ENCODE measurements at regions of chr5 and their contacts with region 1.

Region 1: GRCh38 chr5:151592855-151593408 is 1.8 kb upstream of the FAT2 start:
- DNase-seq: no peak
- H3K4me3 ChIP-seq: no peak overlapping the region
- H3K27ac ChIP-seq: no peak overlapping the region
- H3K4me1 ChIP-seq: peaks cover 62% of the 10 kb centered on the region
- H3K27me3 ChIP-seq: no peaks in the 10 kb centered on the region
- CTCF ChIP-seq: no peak

Region 2: DNA sequence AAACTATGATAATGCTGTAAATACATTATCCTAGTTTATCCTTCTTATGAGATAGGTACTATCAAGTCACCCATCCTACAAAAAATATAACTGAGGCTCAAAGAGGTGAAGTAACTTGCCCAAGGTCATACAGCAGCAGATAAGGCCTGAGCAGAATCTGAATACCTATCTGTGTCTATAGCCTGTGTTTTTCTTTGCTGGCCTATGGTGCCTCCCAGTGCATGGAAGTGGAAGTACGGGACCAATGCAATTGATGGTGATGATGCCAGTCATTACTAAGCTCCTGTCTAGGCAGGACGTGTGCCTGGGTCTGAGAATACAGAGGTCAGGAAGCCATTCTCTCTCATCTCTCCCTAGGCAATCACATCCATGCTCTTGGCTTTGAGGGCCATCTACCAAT is 69.6 kb before region 1 on chr5:
- CTCF ChIA-PET with region 1: no interaction called
- dilution Hi-C with region 1: no loop called
- in situ Hi-C with region 1: no loop called
- intact Hi-C with region 1: no loop called
- DNase-seq: peak; percentile 59
- H3K4me3 ChIP-seq: no peak overlapping the region
- H3K27ac ChIP-seq: no peak overlapping the region
- H3K4me1 ChIP-seq: no peaks in the 10 kb centered on the region
- H3K27me3 ChIP-seq: no peaks in the 10 kb centered on the region
- CTCF ChIP-seq: peak; percentile 61 to 63

Region 3: DNA sequence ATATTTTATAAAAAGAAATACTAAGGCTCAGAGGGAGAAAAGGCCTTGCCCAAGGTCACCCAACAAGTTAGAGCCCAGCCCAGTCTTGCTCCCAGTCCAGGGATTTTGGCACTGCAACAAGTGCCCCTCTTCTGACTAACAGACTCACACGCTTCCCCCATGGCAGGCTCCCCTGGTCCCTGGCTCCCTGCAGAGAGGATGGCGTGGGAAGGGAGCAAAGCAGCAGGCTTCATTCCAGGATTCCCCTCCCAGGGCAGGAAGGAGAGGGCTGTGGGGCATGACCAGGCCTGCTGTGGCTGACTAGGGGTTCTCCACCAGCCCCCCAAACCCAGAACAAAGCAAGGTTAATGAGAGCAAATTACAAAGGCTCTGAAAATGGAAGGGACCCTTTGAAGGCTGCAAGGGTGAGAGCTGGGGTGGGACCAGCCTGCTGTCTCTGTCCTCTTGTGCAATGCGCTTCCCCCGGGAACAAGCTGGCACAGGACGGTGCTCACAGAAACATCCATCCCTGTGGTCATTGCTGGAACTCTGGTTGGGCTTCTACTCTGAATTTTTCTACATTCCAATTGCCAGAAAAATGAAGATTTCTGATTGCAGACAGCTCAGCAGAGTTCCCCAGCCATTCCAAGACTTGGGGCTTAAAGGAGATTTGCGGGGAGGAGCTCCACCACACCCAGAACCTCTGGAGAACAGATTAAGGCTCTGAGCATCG is 35.3 kb after region 1 on chr5:
- CTCF ChIA-PET with region 1: no interaction called
- dilution Hi-C with region 1: no loop called
- in situ Hi-C with region 1: no loop called
- intact Hi-C with region 1: loop called (anchors 5 kb)
- DNase-seq: peak; percentile 86
- H3K4me3 ChIP-seq: no peak overlapping the region
- H3K27ac ChIP-seq: peak overlapping the region; percentile 69
- H3K4me1 ChIP-seq: peaks cover 66% of the 10 kb centered on the region
- H3K27me3 ChIP-seq: no peaks in the 10 kb centered on the region
- CTCF ChIP-seq: peak; percentile 18 to 30

Region 4: DNA sequence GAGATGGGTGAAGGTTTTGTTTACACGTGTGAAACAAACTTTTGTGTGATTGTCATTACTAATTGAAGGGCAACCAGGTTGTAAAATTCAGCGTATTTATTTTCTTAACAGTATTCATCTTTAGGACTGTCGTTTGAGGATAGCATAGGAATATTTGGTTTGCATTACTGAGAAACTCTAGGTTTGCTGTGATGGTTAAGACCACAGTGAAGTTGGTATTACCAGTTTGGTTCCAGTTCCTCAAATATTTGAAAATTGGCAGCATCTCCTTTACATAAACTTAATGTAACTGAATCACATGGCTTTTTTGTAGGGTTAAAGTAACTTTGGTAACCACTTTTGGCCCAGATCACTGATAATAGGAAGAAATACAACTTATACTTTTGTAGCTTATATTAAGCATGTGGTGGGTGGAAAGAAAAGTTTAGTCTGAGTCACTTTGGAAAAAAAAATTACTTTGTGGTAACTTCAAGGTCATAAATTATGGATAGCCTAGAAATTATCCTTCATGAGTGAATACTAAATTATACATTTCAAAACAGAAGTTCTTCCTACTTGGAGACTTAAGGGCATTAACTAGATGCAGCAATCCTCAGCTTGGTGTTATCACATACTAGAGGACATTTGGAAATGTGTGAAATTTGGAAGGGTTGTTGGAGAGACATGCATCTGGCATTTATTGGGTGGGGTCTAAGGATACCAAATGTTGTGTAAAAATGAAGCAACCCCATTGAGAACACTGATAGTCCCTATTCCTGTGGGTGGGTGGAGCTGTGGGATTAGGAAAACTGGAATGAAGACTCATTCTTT is 212.7 kb after region 1 on chr5:
- CTCF ChIA-PET with region 1: no interaction called
- dilution Hi-C with region 1: no loop called
- in situ Hi-C with region 1: no loop called
- intact Hi-C with region 1: no loop called
- DNase-seq: no peak
- H3K4me3 ChIP-seq: no peak overlapping the region
- H3K27ac ChIP-seq: no peak overlapping the region
- H3K4me1 ChIP-seq: no peaks in the 10 kb centered on the region
- H3K27me3 ChIP-seq: no peaks in the 10 kb centered on the region
- CTCF ChIP-seq: no peak